WTC11 (cell line): ENCODE measurements at regions of chr1 and their contacts with region 1.

Region 1: DNA sequence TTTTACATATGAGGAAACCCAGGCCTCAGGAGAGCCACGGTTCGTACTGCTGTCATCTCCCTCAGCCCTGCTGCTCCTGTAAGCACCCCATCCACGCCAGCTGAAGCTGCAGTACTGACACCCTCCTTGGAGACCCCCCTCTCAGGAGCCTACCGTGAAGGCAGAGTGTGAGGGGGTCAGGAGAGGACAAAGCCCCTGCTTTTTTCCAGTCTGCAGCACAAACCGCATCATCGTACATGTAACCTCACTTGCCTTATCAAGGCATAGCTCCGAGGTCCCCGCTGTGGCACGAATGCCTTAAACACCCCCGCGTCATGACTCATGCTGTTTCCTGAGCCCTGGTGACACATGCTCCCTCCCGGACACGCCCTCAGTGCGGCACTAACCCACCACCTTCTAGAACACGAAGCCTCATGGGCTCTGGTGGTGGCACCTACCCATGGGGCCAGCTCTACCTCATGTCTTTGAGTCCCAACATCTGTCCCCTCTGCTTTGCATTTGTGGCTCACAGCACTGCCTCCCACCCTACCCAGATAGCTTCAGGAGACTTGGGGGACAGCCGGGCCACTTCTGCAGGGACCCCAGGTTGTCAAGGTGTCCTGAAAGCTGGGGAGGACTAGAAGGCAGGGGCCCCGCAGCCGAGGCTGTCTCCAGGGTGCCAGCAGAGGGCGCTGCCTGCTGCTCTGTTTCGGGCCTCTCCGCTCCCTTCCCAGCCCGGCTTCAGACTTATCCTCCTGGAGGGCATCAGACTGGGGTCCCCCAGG is 4.9 kb downstream of the SH3BGRL3 start:
- DNase-seq: peak; percentile 86
- ATAC-seq: peak; percentile 54
- H3K4me3 Mint-ChIP-seq: no peak overlapping the region
- H3K27ac Mint-ChIP-seq: peak overlapping the region; percentile 81
- H3K4me1 Mint-ChIP-seq: peaks cover 37% of the 10 kb centered on the region
- H3K27me3 Mint-ChIP-seq: no peaks in the 10 kb centered on the region; the same call in 1 of the 2 replicates
- CTCF ChIP-seq: peak; percentile 86

Region 2: DNA sequence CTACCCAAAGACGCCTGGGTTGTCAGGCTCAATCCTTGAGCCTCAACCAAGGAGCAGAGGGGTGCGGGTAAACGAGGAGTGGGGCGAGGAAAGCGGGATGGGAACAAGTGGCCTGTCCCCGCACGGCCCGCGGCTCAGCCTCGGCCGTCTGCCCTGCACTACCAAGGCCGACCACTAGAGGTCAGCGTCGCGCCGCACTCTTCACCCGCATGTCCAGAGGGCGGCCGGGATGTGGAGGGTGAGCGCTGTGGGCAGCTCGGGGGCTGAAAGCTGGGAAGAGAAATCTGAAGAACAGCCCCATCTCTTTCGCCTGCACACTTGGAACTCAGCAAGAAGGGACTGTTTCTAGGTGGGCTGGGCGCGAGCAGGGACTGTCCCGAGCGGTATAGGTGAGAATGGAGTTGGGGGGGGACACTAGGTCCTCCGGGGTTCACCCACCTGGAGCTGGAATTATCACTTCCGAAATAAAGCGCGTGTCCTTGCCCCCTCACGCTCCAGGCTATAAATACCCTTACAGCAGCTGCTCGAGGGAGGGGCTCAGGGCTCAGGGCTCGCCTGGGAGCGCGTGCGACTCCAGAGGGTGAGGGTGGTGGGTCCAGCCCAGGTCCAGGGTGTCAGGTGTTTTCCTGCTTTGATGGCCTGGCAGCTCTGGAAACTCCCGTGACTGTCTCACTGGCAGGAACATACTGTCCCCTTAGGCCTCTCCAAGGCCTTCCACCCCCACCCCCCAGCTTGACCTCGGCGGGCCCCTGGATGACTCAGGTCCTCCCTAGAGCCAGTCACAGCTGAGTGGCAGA is 248.6 kb before region 1 on chr1:
- CTCF ChIA-PET with region 1: interaction called, 12 read pairs
- POLR2A ChIA-PET with region 1: no interaction called
- DNase-seq: peak; percentile 86
- ATAC-seq: peak; percentile 78
- H3K4me3 Mint-ChIP-seq: peak overlapping the region; percentile 94
- H3K27ac Mint-ChIP-seq: no peak overlapping the region
- H3K4me1 Mint-ChIP-seq: peaks cover 8% of the 10 kb centered on the region
- H3K27me3 Mint-ChIP-seq: peaks cover 54% of the 10 kb centered on the region
- CTCF ChIP-seq: peak; percentile 100

Region 3: DNA sequence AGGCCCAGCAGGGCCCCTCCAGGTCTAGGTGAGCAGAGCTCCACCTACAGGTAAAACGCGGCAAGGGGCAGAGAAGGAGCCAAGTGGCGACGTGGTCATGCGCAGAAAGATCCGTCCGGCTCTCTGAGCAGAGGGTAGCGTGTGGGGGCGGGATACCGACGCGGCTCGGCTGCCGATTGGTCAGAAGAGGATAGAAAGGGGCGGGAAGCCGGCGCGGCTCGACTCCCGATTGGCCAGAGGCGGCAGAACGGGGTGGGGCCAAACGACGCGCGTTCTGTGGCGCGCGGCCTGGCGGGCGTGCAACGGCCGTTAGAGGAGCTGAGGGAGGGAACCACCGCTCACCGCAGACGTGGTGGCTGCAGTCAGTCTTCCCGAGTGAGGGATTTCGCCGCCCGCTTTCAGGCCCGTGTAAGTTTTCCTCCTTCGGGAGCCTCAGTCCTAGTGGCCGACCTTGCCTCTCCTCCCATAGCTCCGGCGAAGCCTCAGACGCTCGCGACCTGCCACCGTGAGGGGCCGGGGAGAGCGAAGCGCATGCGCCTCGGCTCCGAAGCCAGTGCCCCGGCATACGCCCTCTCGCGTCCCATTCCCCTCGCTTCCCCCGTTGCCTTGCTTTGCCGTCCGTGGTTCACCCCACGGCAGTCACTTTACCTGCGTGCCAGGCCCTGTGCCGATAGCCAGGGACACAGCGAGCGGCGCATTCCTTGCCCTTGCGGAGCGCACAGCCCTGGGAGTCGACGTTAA is 50.7 kb before region 1 on chr1 and contains the start of gene CEP85:
- CTCF ChIA-PET with region 1: interaction called, 30 read pairs
- POLR2A ChIA-PET with region 1: interaction called, 3 read pairs
- DNase-seq: peak; percentile 99
- ATAC-seq: peak; percentile 96
- H3K4me3 Mint-ChIP-seq: peak within 1 kb of the TSS; percentile 99
- H3K27ac Mint-ChIP-seq: peak within 1 kb of the TSS; percentile 87
- H3K4me1 Mint-ChIP-seq: peaks cover 25% of the 10 kb centered on the region
- H3K27me3 Mint-ChIP-seq: peaks cover 4% of the 10 kb centered on the region
- CTCF ChIP-seq: peak; percentile 49; the same call in 1 of the 2 replicates
- total RNA-seq, gene CEP85: 32.0 to 40.8 TPM (median 35.3 TPM) in 3 replicates

Region 4: DNA sequence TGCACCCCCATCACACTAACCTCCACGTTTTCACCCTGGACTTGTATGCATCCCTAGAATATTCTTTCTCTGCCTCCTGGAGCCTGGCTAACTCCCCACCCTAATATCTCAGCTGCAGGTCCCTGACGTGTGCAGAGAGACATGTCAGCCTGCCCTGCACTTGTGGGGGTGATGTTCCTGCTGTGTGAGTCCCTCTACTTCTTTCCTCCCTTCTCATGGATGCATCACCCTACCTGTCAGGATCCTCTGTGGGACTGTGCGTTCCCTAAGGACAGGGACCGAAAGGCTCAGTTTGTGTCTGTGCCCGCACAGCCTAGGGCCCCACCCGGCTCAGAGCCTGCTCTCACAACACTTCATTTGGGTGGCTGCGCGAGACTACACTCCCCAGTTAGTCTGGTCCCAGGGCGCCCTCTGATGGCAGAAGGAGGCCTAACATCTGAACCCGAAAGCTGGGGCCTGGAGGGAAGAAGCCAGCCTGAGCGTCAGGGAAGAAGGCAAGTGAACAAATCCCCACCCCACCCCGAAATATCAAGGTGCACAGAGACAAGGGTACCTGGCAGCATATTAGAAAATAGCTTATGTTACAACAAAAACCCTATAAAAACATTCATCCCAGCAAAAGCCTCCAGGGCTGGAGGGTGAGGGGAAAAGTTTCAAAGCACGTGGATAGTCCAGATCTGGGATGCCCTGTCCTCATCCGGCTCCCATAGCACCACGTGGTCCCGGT is 36.7 kb after region 1 on chr1:
- CTCF ChIA-PET with region 1: interaction called, 306 read pairs
- POLR2A ChIA-PET with region 1: interaction called, 5 read pairs
- DNase-seq: peak; percentile 98
- ATAC-seq: peak; percentile 83
- H3K4me3 Mint-ChIP-seq: no peak overlapping the region
- H3K27ac Mint-ChIP-seq: peak overlapping the region; percentile 93
- H3K4me1 Mint-ChIP-seq: peaks cover 20% of the 10 kb centered on the region
- H3K27me3 Mint-ChIP-seq: no peaks in the 10 kb centered on the region
- CTCF ChIP-seq: peak; percentile 85

Region 5: GRCh38 chr1:26349188-26349876 is 64.6 kb after region 1 on chr1:
- CTCF ChIA-PET with region 1: interaction called, 15 read pairs
- POLR2A ChIA-PET with region 1: interaction called, 4 read pairs
- DNase-seq: no peak
- ATAC-seq: no peak
- H3K4me3 Mint-ChIP-seq: no peak overlapping the region
- H3K27ac Mint-ChIP-seq: 0 out of 2 replicates have a peak overlapping the region, but pooled peaks have one; percentile 26
- H3K4me1 Mint-ChIP-seq: peaks cover 32% of the 10 kb centered on the region
- H3K27me3 Mint-ChIP-seq: no peaks in the 10 kb centered on the region
- CTCF ChIP-seq: no peak

Region 6: DNA sequence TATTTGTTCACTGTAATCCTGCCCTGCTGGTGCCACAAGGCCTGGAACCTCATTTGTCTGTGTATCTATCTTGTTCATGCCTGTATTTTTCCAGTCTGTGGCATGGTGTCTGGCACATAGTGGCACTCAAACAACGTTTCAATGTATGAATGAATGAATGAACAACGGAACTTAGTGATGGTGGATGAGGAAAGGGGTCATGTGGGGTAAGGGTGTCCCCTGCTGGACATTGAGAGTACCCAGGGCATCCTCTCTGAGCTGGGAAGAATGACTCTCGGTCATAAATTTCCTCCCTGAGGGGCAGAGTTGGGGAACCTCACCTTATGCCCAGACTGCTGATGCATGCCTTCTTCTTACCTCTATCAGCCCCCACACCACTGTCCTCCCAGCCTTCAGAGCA is 106.7 kb after region 1 on chr1:
- CTCF ChIA-PET with region 1: interaction called, 81 read pairs
- POLR2A ChIA-PET with region 1: interaction called, 8 read pairs
- DNase-seq: peak; percentile 38
- ATAC-seq: peak; percentile 86
- H3K4me3 Mint-ChIP-seq: no peak overlapping the region
- H3K27ac Mint-ChIP-seq: no peak overlapping the region
- H3K4me1 Mint-ChIP-seq: peaks cover 18% of the 10 kb centered on the region
- H3K27me3 Mint-ChIP-seq: no peaks in the 10 kb centered on the region
- CTCF ChIP-seq: peak; percentile 72